A549 (cell line): ENCODE measurements at regions of chr16 and their contacts with region 1.

Region 1: DNA sequence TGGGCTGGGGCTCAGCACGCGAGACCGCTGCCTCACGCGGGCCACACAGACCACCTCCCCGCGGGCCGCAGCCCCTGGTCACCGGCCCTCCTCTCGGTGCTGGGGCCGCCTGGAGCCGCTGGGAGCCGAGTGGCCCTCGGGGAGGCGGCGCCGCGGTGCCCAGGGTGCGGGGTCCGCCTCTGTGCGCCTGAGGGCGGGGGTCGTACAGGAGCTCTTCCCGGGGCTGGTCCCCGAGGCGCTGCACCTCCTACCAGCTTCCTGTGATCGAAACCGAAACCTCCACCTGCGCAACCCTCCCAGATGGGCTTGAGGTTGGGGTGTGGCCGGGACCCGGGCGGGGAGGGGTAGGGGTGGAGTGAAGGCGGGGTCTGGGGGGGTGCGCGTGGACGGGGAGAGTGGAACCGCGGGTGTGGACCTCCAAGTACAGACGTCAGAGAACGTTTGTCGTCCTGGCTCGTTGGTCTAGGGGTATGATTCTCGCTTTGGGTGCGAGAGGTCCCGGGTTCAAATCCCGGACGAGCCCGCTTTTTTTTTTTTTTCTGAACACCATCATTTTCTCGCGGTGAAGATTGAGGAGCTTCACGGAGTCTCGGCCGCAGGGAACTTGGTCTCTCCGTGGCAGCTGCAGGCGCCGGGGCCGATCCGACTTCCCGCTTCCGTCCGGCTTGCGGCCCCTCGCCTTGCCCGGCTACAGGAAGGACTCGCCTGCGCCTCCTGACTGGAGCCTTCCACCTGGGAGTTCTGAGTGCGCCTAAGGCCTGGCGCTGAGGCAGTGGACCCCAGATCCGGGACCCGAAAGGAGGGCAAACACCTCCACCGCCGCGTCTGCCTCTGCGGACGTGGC is 23.9 kb downstream of the ZNF213 start:
- DNase-seq: peak; percentile 94 to 95
- ATAC-seq: peak; percentile 63 to 66
- H3K4me3 ChIP-seq: peak overlapping the region; percentile 95
- H3K27ac ChIP-seq: peak overlapping the region; percentile 89 to 96
- H3K4me1 ChIP-seq: no peaks in the 10 kb centered on the region
- CTCF ChIP-seq: no peak
- EP300 ChIP-seq: no peak
- POLR2A ChIP-seq: 0 out of 2 replicates have a peak, but pooled peaks have one; percentile 6
- RAD21 ChIP-seq: no peak

Region 2: DNA sequence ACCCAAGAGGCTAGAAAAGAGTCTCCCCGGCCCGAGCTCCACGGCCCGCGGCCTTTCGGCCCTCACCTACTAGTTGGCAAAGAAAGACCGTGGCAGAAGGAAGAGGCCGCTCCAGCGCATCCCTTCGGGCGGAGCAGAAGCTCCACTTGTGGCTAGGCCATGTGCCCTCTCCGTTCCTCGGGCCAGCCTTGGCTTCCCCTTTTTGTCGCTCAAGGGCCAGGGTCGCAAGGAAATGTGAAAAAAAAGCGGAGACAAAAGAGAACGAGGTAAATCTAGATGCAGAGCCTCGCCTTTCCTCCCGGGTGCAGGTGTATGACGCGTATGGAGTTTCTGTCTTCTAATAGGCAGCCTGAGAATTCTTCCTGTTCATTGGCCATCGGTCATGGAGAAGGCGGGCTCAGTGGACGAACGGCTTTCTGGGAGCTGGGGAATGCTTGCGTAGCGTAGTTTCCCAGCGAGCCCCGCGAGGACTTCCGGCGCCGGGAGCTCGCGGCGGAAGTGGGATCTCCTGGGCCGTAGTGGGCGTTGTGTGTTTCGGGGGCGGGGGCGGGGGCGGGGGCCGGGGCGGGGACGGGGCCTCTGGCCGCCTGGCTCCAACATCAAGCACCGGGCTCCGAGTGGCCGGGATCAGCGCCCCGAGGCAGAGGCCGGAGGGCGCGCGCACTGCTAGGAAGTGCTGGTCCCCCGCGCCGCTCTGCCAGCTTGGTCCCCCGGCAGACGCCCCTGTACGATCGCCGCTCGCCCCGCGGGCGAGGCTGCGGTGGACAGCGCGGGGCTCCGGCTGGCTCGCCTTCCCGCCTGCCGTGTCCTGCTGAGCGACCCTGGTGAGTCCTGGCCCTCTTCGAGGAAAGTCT is 23.9 kb before region 1 on chr16 and contains the start of gene ZNF213:
- CTCF ChIA-PET with region 1: interaction called, 36 read pairs
- POLR2A ChIA-PET with region 1: interaction called, 15 read pairs
- DNase-seq: peak; percentile 94 to 98
- ATAC-seq: peak; percentile 95 to 96
- H3K4me3 ChIP-seq: peak within 1 kb of the TSS; percentile 98
- H3K27ac ChIP-seq: peak within 1 kb of the TSS; percentile 90 to 98
- H3K4me1 ChIP-seq: peaks cover 14% of the 10 kb centered on the region; the same call in 1 of the 3 replicates
- CTCF ChIP-seq: no peak
- EP300 ChIP-seq: no peak
- POLR2A ChIP-seq: peak; percentile 70
- RAD21 ChIP-seq: no peak
- polyA plus RNA-seq, gene ZNF213: 0.72 and 1.8 TPM in 2 replicates

Region 3: DNA sequence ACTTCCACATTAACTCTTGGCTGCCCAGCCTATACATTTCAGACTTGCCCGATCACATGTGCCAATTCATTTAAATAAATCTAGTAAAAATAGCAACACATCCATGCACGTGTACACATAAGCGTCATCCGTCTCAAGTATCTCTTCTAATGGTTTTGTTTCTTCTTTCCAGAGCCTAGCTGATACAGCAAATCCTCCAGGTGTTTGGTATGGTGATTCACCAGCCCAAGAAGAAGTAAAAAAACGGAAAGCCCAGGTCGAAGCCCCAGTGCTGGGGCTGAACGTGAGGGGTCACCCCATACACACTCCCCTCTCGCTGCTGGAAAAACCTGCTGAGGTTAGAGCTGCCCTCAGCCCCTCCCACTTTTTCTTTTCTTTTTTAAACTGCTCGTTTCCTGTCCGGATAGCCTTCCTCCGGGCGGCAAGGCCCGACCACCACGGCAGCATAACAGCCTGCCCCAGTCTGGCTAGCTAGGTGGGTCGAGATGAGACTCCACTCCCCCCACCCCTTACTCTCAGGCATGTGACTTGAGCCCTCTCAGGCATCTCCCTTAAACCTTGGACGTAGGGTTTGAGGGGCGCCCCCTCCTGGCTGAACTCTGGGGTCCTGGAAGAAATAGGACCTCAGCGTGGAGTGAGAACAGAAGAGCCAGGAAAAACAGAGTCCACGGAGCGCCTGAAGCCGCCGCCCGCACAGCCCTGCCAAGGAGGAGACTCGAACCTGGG is 15.4 kb after region 1 on chr16:
- CTCF ChIA-PET with region 1: interaction called, 40 read pairs
- POLR2A ChIA-PET with region 1: interaction called, 5 read pairs
- DNase-seq: peak; percentile 76 to 85
- ATAC-seq: peak; percentile 32 to 36
- H3K4me3 ChIP-seq: peak overlapping the region; percentile 51
- H3K27ac ChIP-seq: peak overlapping the region; percentile 37 to 79; a peak in 5 of 6 replicates
- H3K4me1 ChIP-seq: peaks cover 20% of the 10 kb centered on the region; the same call in 2 of the 3 replicates
- CTCF ChIP-seq: peak; percentile 61
- EP300 ChIP-seq: no peak
- POLR2A ChIP-seq: no peak
- RAD21 ChIP-seq: peak in 1 of 2 experiments; percentile 22; a peak in 2 of 5 replicates

Region 4: GRCh38 chr16:3182608-3183444 is 24.1 kb after region 1 on chr16:
- CTCF ChIA-PET with region 1: interaction called, 10 read pairs
- POLR2A ChIA-PET with region 1: interaction called, 7 read pairs
- DNase-seq: peak; percentile 67 to 88
- ATAC-seq: peak; percentile 69 to 73
- H3K4me3 ChIP-seq: peak overlapping the region; percentile 66
- H3K27ac ChIP-seq: peak overlapping the region; percentile 65 to 80
- H3K4me1 ChIP-seq: peaks cover 4% of the 10 kb centered on the region; the same call in 1 of the 3 replicates
- CTCF ChIP-seq: no peak; the same call in 2 of the 3 replicates
- EP300 ChIP-seq: no peak
- POLR2A ChIP-seq: no peak
- RAD21 ChIP-seq: peak; percentile 23 to 43; a peak in 4 of 5 replicates